Activated B cell treated with CpG ODN at 0.5 μM for 24 hours (primary cell): ENCODE measurements at regions of chr7 and their contacts with region 1.

Region 1: DNA sequence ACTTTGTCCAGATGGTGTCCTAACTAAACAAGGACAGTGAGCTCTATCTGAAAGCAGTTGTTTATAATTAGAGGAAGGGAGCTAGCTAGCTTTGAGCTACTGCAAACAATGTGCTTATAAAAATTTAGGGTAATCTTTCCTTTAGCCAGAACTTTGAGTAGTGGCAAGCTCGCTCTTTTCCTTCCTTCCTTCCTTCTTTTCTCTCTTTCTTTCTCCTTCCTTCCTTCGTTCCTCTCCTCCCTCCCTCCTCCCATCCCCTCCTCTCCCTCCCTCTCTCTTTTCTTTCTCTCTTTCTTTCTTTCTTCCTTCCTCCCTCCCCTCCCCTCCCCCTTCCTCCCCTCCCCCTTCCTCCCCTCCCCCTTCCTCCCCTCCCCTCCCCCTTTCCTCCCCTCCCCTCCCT is 520.1 kb downstream of the INHBA start:
- DNase-seq: no peak
- ATAC-seq: no peak
- H3K4me3 Mint-ChIP-seq: no peak overlapping the region
- H3K27ac Mint-ChIP-seq: no peak overlapping the region
- H3K4me1 Mint-ChIP-seq: no peaks in the 10 kb centered on the region
- H3K27me3 Mint-ChIP-seq: no peaks in the 10 kb centered on the region
- CTCF ChIP-seq: no peak

Region 2: DNA sequence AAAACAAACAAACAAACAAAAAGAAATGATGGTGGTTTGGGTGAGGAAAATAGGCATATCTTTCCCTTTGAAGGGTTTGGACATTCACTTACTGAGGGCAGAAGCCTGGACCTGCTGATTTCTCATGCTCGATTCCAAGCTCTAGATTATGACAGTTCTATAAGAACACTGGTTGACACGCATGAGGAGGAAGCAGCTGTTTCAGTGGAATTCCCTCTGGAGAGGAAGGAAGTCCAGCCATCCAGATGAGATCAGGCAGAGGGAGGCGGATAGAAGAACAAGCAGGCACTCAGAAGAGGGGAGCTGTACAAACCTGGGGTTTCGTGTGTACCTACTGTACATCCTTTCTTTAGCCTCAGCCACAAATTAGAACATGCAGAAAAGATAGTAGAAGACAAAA is 171.8 kb before region 1 on chr7:
- CTCF ChIA-PET with region 1: no interaction called
- POLR2A ChIA-PET with region 1: interaction called, 13 read pairs
- intact Hi-C with region 1: no loop called
- DNase-seq: no peak
- ATAC-seq: no peak
- H3K4me3 Mint-ChIP-seq: no peak overlapping the region
- H3K27ac Mint-ChIP-seq: no peak overlapping the region
- H3K4me1 Mint-ChIP-seq: no peaks in the 10 kb centered on the region
- H3K27me3 Mint-ChIP-seq: no peaks in the 10 kb centered on the region
- CTCF ChIP-seq: no peak

Region 3: GRCh38 chr7:42175834-42176723 is 993.3 kb after region 1 on chr7:
- CTCF ChIA-PET with region 1: no interaction called
- POLR2A ChIA-PET with region 1: no interaction called
- intact Hi-C with region 1: no loop called
- DNase-seq: no peak
- ATAC-seq: no peak
- H3K4me3 Mint-ChIP-seq: no peak overlapping the region
- H3K27ac Mint-ChIP-seq: no peak overlapping the region
- H3K4me1 Mint-ChIP-seq: no peaks in the 10 kb centered on the region
- H3K27me3 Mint-ChIP-seq: peaks cover 2% of the 10 kb centered on the region
- CTCF ChIP-seq: no peak